Activated CD8-positive, alpha-beta memory T cell treated with anti-CD3 and anti-CD28 coated beads, Interleukin-2, amount 10 ng/mL, durations not matched to agents 7 days and 5 days (primary cell): ENCODE measurements at regions of chr2 and their contacts with region 1.

Region 1: DNA sequence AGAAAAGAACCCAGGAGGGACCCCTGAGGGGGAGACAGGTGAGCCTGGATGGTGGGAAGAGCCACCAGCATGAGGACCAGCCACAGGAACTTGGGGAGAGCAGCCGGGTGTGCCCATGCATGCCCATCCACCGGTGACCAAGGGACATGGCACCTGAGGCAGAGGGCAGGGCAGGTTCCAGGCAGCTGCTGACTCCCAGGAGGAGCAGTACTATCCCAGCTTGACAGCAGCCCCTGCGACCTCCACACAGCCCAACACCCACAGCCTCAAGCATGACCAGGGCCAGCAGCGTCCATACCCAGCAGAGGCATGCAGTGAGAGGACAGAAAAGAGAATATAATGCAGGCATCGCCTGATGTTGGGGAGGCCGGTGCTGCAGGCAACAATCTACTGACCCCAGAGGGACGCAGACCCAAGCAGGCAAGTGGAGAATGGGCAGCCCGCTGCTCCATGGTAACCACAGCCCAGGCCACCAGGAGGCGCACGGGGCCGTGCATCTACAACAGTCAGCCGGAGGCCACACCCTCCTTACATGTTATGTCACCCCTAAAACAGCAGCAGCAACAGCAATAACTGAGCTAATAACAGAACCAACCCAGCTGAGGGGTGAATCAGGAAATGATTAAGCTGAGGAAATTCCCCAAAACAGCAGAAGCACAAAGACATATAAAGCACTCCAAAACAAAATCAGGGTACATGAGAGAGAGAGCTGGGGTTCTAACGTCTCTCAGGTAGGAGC is 44.1 kb downstream of the ANKMY1 start:
- DNase-seq: peak; percentile 91
- ATAC-seq: peak; percentile 97
- H3K4me3 Mint-ChIP-seq: no peak overlapping the region
- H3K27ac Mint-ChIP-seq: peak overlapping the region; percentile 71
- H3K4me1 Mint-ChIP-seq: peaks cover 15% of the 10 kb centered on the region
- H3K27me3 Mint-ChIP-seq: no peaks in the 10 kb centered on the region

Region 2: GRCh38 chr2:240426797-240427721 is 86.7 kb before region 1 on chr2:
- CTCF ChIA-PET with region 1: no interaction called
- DNase-seq: no peak
- ATAC-seq: no peak
- H3K4me3 Mint-ChIP-seq: no peak overlapping the region
- H3K27ac Mint-ChIP-seq: no peak overlapping the region
- H3K4me1 Mint-ChIP-seq: peaks cover 18% of the 10 kb centered on the region
- H3K27me3 Mint-ChIP-seq: peaks cover 21% of the 10 kb centered on the region

Region 3: DNA sequence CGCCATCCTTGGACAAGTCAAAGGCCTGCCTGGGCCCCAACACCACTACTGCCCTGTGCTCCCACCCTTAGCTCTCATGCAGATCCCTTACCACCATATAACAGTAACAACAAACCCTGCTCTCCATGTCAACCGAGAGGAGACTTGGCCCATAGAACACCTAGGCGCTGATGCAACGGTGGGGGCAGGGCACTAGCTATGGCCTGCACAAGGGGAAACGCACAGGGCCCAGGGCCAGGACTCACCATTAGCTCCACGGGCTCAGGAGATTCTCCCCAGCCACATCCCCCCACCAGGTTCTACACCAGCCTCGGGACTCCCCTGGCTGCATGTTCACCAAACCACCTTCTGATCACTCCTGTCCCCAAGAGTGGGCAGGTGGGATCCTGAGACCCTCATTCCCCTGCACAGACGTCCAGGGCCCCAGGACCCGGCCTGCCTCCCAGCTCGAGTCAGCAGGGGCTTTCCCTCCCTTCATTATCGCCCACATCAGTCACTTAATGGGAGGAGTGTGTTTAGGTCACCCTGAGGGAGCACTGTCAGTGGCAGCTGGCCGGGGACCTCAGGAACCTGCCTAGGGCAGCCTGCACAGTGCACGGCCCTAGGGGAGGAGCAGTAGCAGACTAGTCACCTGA is 14.8 kb after region 1 on chr2:
- CTCF ChIA-PET with region 1: interaction called, 10 read pairs
- DNase-seq: no peak
- ATAC-seq: no peak
- H3K4me3 Mint-ChIP-seq: no peak overlapping the region
- H3K27ac Mint-ChIP-seq: no peak overlapping the region
- H3K4me1 Mint-ChIP-seq: no peaks in the 10 kb centered on the region
- H3K27me3 Mint-ChIP-seq: no peaks in the 10 kb centered on the region

Region 4: DNA sequence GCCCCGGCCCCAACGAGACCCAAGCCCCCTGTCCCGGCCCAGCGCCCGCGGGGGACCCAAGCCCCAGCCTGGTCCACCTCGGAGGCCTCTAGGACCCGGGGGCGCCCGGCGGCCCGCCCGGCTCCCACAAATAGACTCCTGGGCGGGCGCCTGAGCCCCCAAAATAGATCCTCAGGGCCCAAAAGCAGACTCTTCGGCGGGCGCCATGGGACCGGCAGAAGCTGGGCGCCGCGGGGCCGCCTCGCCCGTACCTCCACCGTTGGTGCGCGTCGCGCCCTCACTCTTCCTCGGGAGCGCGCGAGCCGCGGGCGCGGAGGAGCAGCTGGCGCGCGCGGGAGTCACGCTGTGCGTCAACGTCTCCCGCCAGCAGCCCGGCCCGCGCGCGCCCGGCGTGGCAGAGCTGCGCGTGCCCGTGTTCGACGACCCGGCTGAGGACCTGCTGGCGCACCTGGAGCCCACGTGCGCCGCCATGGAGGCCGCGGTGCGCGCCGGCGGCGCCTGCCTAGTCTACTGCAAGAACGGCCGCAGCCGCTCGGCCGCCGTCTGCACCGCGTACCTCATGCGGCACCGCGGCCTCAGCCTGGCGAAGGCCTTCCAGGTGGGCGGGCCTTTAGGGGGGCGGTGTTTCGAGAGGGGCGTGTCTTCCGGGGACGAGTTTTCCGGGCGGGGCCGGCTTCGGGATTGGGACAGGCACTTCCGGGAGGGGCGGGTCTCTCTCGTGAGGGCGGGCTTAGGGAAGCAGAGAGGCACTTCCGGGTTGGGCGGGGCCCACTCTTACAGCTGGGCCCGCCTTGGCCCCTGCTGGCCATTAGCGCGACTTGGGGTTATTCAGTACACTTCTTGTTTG is 47.0 kb after region 1 on chr2:
- CTCF ChIA-PET with region 1: interaction called, 37 read pairs
- DNase-seq: peak; percentile 100
- ATAC-seq: peak; percentile 63
- H3K4me3 Mint-ChIP-seq: peak overlapping the region; percentile 85
- H3K27ac Mint-ChIP-seq: peak overlapping the region; percentile 82
- H3K4me1 Mint-ChIP-seq: peaks cover 77% of the 10 kb centered on the region
- H3K27me3 Mint-ChIP-seq: no peaks in the 10 kb centered on the region

Region 5: DNA sequence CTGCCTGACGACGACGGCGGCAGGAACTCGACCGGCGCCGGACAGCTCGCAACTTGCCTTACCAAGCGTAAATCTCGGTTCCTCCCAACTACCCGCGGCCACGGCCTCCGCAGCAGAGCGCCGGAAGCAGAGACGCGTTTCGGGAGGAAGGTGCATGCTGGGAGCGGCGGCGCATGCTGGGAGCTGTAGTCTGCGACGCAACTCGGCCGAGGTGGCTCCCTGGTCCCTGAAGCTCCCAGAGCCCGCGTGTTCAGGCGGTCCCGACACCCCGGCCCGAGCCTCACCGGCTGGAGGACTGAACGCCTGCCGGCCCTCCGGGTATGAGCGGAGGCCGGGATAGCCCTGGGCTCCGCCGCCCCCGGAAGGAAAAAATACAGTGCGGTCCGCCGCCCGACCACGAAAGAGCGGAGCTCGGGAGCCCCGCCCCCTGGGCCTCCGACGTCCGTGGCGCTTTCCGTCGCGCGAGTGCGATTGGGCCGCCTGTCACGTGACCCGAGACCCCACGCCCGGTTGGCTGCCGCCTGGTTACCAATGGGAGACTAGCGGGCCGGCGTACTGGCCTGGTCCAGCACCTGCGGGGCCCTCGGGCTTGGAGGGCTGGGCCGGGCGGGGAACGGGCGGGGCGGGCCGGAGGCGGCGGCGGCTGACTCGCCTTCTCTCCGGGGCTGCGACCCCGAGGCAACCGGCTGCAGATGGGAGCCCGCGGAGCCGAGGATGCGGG is 72.6 kb after region 1 on chr2 and contains the start of gene CAPN10:
- CTCF ChIA-PET with region 1: interaction called, 40 read pairs
- DNase-seq: peak; percentile 98
- ATAC-seq: peak; percentile 91
- H3K4me3 Mint-ChIP-seq: peak within 1 kb of the TSS; percentile 91
- H3K27ac Mint-ChIP-seq: peak within 1 kb of the TSS; percentile 89
- H3K4me1 Mint-ChIP-seq: peaks cover 47% of the 10 kb centered on the region
- H3K27me3 Mint-ChIP-seq: no peaks in the 10 kb centered on the region
- total RNA-seq, gene CAPN10: 54.0 to 75.8 TPM

Region 6: GRCh38 chr2:240604291-240604938 is 90.7 kb after region 1 on chr2:
- CTCF ChIA-PET with region 1: interaction called, 10 read pairs
- DNase-seq: no peak
- ATAC-seq: peak; percentile 39
- H3K4me3 Mint-ChIP-seq: no peak overlapping the region
- H3K27ac Mint-ChIP-seq: no peak overlapping the region
- H3K4me1 Mint-ChIP-seq: peaks cover 10% of the 10 kb centered on the region
- H3K27me3 Mint-ChIP-seq: no peaks in the 10 kb centered on the region